GM12878 (cell line): ENCODE measurements at regions of chr7 and their contacts with region 1.

Region 1: GRCh38 chr7:137909037-137909436 is 62.3 kb upstream of the DGKI start:
- DNase-seq: no peak
- ATAC-seq: no peak
- H3K4me3 ChIP-seq: no peak overlapping the region
- H3K27ac ChIP-seq: no peak overlapping the region
- H3K4me1 ChIP-seq: no peaks in the 10 kb centered on the region
- H3K27me3 ChIP-seq: no peaks in the 10 kb centered on the region
- CTCF ChIP-seq: no peak
- EP300 ChIP-seq: no peak
- POLR2A ChIP-seq: no peak
- RAD21 ChIP-seq: no peak

Region 2: DNA sequence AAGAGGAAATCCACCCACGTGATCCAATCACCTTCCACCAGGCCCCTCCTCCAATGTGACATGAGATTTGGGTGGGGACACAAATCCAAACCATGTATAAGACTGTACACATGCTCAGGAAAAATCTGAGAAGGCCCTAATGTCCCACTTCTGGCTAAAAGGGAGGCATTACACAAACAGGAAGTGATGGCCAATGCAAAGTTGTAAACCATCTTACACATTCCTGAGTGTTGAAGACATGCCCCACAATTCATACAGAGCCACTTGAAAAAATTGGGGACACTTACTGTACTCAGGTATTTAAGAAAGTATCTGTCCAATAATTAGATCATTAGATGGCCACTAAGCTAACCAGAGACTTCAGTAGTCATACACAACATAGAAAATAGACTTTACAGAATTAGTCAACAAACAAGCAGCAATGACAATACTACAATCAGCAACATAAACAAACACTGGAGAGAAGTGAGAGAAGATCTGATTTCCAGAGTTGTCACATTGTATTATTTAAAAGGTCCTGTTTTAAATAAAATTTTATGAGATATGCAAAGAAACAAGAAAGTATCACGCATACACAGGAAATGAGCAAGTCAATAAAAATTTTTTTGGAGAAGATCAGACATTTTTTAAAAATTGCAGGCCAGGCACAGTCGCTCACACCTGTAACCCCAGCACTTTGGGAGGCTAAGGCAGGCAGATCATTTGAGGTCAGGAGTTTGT is 205.6 kb before region 1 on chr7:
- CTCF ChIA-PET with region 1: no interaction called
- POLR2A ChIA-PET with region 1: no interaction called
- RAD21 ChIA-PET with region 1: no interaction called
- SMC1A ChIA-PET with region 1: no interaction called
- in situ Hi-C with region 1: no loop called
- intact Hi-C with region 1: no loop called
- DNase-seq: no peak
- ATAC-seq: no peak
- H3K4me3 ChIP-seq: no peak overlapping the region
- H3K27ac ChIP-seq: no peak overlapping the region
- H3K4me1 ChIP-seq: no peaks in the 10 kb centered on the region
- H3K27me3 ChIP-seq: no peaks in the 10 kb centered on the region
- CTCF ChIP-seq: no peak
- EP300 ChIP-seq: no peak
- POLR2A ChIP-seq: no peak
- RAD21 ChIP-seq: no peak

Region 3: GRCh38 chr7:137920637-137921399 is 11.8 kb after region 1 on chr7:
- CTCF ChIA-PET with region 1: interaction called, 38 read pairs
- POLR2A ChIA-PET with region 1: interaction called, 3 read pairs
- RAD21 ChIA-PET with region 1: interaction called, 5 read pairs
- SMC1A ChIA-PET with region 1: interaction called, 14 read pairs
- in situ Hi-C with region 1: no loop called
- intact Hi-C with region 1: no loop called
- DNase-seq: no peak
- ATAC-seq: no peak
- H3K4me3 ChIP-seq: no peak overlapping the region
- H3K27ac ChIP-seq: no peak overlapping the region
- H3K4me1 ChIP-seq: peaks cover 30% of the 10 kb centered on the region
- H3K27me3 ChIP-seq: no peaks in the 10 kb centered on the region
- CTCF ChIP-seq: no peak
- EP300 ChIP-seq: no peak
- POLR2A ChIP-seq: no peak
- RAD21 ChIP-seq: no peak

Region 4: DNA sequence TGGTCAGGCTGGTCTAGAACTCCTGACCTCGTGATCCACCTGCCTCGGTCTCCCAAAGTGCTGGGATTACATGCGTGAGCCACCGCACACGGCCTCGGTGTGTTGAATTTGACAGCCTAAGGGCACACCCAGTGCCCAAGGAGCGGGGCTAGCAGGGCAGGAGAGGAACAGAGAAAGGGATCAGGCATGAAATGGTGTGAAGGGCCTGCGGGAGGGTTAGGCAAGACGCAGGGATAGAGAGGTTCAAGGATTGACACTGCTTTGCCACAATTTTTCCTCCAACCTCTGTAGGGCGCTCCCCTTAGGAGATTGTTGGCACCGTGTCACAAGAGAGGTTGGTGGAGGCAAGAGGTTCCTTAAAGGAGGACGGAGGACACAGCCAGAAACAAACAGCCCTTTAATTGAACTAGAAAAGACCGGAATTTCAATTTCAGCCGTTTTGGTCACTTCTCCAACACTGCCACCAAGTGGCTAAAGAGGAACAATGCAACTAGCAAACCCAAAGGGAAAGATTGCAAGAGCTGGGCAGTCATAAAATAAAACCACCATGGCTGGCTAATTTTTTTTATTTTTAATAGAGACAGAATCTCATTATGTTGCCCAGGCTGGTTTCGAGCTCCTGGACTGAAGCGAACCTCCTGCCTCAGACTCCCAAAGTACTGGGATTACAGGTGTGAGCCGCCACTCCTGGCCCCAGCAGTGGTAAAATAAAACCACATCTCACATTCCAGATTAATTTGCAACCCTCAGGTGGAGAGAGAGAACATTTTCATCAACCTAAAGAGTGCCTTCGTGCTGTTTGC is 99.7 kb after region 1 on chr7:
- CTCF ChIA-PET with region 1: interaction called, 704 read pairs
- POLR2A ChIA-PET with region 1: interaction called, 5 read pairs
- RAD21 ChIA-PET with region 1: interaction called, 340 read pairs
- SMC1A ChIA-PET with region 1: interaction called, 436 read pairs
- in situ Hi-C with region 1: loop called (anchors 5 kb)
- intact Hi-C with region 1: no loop called
- DNase-seq: no peak
- ATAC-seq: peak; percentile 86
- H3K4me3 ChIP-seq: no peak overlapping the region
- H3K27ac ChIP-seq: no peak overlapping the region
- H3K4me1 ChIP-seq: no peaks in the 10 kb centered on the region
- H3K27me3 ChIP-seq: no peaks in the 10 kb centered on the region
- CTCF ChIP-seq: peak; percentile 80 to 84 (median 80)
- EP300 ChIP-seq: no peak; a peak in 1 of 4 replicates
- POLR2A ChIP-seq: no peak
- RAD21 ChIP-seq: peak; percentile 100